ENCODE measurements at regions of chr4 and their contacts with region 1.

Region 1: DNA sequence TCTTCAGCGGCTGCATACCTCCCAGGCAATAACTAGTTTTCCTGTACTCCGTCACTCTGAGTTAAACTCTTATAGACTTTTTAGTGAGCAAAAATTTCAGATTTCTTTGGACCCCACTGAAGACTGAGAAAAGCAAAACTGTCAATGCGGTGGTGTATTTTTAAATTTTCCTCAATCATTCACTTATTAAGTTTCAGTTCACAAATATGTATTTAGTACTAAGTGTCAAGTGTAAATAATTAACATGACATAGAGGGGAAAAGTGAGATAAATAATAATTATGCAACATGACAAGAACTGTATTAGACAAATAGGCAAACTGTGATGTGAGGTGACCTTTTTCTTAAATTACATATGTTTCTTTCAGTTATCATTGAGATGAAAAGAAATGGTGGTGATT is 124.4 kb downstream of the NAF1 start:
- DNase-seq: no peak
- H3K4me3 ChIP-seq: no peak overlapping the region
- H3K27ac ChIP-seq: no peak overlapping the region
- H3K4me1 ChIP-seq: no peaks in the 10 kb centered on the region
- H3K27me3 ChIP-seq: no peaks in the 10 kb centered on the region
- CTCF ChIP-seq: no peak
- POLR2A ChIP-seq: no peak

Region 2: DNA sequence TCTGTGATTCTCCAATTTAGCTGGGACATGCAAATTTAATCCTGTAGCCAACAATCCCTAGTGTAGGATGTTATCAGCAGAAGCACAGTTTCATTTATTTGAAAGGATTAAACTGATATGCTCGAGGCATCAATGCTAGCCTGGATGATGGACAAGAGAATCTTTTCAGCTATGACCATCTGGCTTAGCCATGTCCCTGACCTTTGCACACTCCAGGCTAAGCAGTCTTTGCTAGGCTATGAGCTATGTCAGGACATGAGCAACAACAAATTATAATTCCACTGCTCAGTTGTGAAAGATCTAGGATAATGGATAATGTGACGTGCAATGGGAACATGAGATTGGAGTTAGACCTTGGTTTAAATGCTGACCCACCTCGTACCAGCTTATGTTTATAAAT is 258.1 kb after region 1 on chr4:
- intact Hi-C with region 1: loop called (anchors 5 kb)
- DNase-seq: no peak
- H3K4me3 ChIP-seq: no peak overlapping the region
- H3K27ac ChIP-seq: no peak overlapping the region
- H3K4me1 ChIP-seq: no peaks in the 10 kb centered on the region
- H3K27me3 ChIP-seq: no peaks in the 10 kb centered on the region
- CTCF ChIP-seq: no peak
- POLR2A ChIP-seq: no peak

Measured in breast epithelium (tissue), 4 donors.